Dendritic cell treated with granulocyte-macrophage colony-stimulating factor and Interleukin-4, amounts not matched to agents 40 ng/mL and 50 ng/mL, for 4 days (primary cell): ENCODE measurements at regions of chr7 and their contacts with region 1.

Region 1: DNA sequence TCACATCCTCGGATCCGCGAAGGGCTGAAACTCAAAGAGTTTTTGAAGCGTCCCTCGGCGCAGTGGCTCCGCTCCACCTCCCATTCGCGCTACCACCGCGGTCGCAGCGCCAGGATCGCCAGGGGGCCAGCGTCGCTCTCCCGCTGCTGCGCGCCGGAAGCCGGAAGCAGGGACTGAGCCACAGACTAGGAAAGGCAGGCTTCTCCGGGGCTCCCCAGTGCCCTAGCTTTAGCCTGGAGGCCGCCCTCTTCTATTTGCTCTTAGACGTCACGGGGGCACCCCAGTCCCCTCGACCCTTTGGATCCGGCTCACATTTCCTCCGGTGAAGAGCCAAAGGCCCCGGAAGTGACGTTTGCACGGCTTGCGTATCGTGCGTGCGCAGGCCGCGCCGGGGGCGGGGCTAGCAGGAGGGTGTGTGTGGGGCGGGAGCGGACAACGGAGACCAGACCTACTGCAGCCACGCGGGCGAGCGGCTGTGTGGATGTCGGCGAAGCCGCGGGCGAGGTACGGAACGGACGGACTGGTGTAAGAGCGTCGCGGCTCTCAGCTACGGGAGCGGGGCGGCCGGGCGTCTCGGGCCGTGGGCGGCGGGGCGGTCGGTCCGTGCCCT is 25.5 kb downstream of the KCTD7 start:
- H3K4me3 Mint-ChIP-seq: peak overlapping the region; percentile 96
- H3K27ac Mint-ChIP-seq: peak overlapping the region; percentile 93
- H3K4me1 Mint-ChIP-seq: peaks cover 39% of the 10 kb centered on the region
- H3K27me3 Mint-ChIP-seq: no peaks in the 10 kb centered on the region

Region 2: DNA sequence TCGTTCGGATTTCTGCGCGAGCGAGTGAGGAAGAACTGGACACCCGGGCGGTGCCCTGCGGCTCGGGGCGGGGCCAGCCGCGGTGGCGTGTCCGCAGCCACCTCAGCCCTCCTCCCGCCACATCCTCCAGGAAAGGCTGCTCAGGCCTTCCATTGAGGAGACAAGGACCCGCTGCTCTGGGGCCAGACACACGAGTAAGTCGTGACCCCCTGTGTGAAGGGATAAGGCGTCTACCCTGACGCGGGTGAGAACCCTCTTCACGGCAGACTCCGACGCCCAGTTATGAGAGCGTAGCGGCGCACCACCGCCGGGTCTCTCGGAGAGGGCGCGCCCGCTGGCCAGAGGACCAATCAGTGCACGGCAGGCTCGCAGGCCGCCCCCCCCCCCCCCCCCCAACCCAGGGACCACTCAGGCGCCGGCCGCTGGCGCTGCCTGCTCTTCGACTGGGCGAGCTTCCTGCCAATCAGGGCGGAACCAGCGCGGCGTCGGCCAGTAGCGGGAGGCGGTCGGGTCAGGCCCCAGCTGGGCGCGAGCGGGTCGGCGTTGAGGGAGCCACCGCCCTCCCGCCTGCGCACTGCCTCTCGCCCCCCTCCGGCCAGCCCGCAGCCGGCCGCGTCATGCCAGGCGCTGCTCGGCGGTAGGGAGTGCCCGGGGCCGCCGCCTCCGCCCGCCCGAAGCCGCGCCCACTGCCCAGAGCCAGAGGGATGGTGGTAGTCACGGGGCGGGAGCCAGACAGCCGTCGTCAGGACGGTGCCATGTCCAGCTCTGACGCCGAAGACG is 25.7 kb before region 1 on chr7 and contains the start of gene KCTD7:
- intact Hi-C with region 1: loop called (anchors 1 kb)
- H3K4me3 Mint-ChIP-seq: peak within 1 kb of the TSS; percentile 85
- H3K27ac Mint-ChIP-seq: peak within 1 kb of the TSS; percentile 98
- H3K4me1 Mint-ChIP-seq: peaks cover 53% of the 10 kb centered on the region
- H3K27me3 Mint-ChIP-seq: peaks cover 21% of the 10 kb centered on the region

Region 3: DNA sequence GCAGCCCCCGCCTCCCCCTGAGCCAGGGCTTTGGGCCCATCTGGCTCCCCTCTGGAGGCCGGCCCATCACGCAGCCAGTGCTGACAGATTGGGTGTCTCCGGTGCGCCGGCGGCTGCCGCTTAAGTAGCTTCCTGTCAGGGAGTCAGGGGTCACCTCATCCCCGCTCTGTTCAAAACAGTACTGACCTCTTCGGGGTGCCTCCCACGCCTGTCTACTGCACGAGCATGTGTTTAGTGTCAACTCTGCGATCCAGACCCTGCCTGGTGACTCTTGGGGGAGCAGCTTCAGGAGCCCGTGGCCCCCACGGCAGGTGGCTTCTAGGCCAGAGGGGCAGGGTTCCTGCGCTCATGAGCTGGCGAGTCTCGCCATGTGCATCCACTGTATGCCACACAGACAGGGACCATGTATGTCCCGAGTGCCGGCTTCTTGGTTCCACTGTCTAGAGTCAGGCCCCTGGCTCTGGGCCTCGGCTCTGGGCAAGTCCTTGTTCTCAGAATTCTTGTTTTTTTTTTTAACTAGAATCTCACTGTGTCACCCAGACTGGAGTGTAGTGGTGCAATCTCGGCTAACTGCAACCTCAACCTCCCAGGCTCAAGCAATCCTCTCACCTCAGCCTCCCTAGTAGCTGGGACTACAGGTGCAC is 10.5 kb after region 1 on chr7:
- intact Hi-C with region 1: no loop called
- H3K4me3 Mint-ChIP-seq: no peak overlapping the region
- H3K27ac Mint-ChIP-seq: no peak overlapping the region
- H3K4me1 Mint-ChIP-seq: peaks cover 17% of the 10 kb centered on the region
- H3K27me3 Mint-ChIP-seq: no peaks in the 10 kb centered on the region

Region 4: DNA sequence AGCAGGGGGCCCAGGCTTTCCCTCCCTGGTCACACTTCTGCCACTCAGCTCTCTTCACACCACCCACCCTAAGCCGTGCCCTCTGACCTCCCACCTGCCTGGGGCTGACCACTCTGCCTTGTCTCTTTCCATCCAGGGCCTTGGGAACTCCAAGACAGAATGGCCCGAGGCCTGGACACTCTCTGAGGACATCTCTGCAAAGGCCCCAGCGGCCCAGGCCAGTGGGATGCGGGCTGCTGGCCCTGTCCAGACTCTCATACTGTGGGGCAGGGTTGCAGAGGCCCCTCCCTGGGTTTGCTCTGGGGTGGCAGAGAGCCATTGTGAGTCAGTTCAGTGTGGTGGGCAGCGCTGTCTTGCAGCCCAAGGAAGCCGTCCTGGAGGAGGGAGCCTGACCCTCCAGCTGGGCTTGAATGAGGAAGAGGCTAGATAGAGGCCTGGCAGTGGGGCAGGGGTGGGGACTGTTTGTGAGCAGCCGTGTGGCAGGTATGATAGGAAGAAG is 46.5 kb after region 1 on chr7:
- intact Hi-C with region 1: no loop called
- H3K4me3 Mint-ChIP-seq: no peak overlapping the region
- H3K27ac Mint-ChIP-seq: no peak overlapping the region
- H3K4me1 Mint-ChIP-seq: no peaks in the 10 kb centered on the region
- H3K27me3 Mint-ChIP-seq: no peaks in the 10 kb centered on the region